ENCODE measurements at regions of chr4 and their contacts with region 1.

Region 1: GRCh38 chr4:77862478-77863216 is at the start of gene MRPL1:
- DNase-seq: peak; percentile 89
- ATAC-seq: peak; percentile 88
- H3K4me3 ChIP-seq: peak within 1 kb of the TSS; percentile 78
- H3K27ac ChIP-seq: peak within 1 kb of the TSS; percentile 94
- H3K4me1 ChIP-seq: peaks cover 6% of the 10 kb centered on the region; the same call in 1 of the 2 replicates
- H3K27me3 ChIP-seq: no peaks in the 10 kb centered on the region
- CTCF ChIP-seq: no peak; a peak in 1 of 6 replicates
- EP300 ChIP-seq: peak in 1 of 2 experiments; percentile 45; a peak in 1 of 4 replicates
- POLR2A ChIP-seq: peak; percentile 89
- RAD21 ChIP-seq: 0 out of 2 replicates have a peak, but pooled peaks have one; percentile 18
- polyA plus RNA-seq, gene MRPL1: 26.3 to 35.7 TPM

Region 2: GRCh38 chr4:77819843-77820648 is 42.6 kb before region 1 on chr4:
- CTCF ChIA-PET with region 1: interaction called, 8 read pairs
- POLR2A ChIA-PET with region 1: interaction called, 9 read pairs
- RAD21 ChIA-PET with region 1: interaction called, 13 read pairs
- SMC1A ChIA-PET with region 1: interaction called, 5 read pairs
- in situ Hi-C with region 1: no loop called
- intact Hi-C with region 1: loop called (anchors 1 kb)
- DNase-seq: peak; percentile 37
- ATAC-seq: peak; percentile 87
- H3K4me3 ChIP-seq: peak overlapping the region; percentile 83
- H3K27ac ChIP-seq: peak overlapping the region; percentile 76
- H3K4me1 ChIP-seq: peaks cover 3% of the 10 kb centered on the region; the same call in 1 of the 2 replicates
- H3K27me3 ChIP-seq: no peaks in the 10 kb centered on the region; a peak in 1 of 4 replicates
- CTCF ChIP-seq: no peak
- EP300 ChIP-seq: no peak
- POLR2A ChIP-seq: peak; percentile 77
- RAD21 ChIP-seq: no peak

Measured in GM12878 (cell line).